Activated B cell treated with CpG ODN at 0.5 μM for 24 hours (primary cell): ENCODE measurements at regions of chr2 and their contacts with region 1.

Region 1: DNA sequence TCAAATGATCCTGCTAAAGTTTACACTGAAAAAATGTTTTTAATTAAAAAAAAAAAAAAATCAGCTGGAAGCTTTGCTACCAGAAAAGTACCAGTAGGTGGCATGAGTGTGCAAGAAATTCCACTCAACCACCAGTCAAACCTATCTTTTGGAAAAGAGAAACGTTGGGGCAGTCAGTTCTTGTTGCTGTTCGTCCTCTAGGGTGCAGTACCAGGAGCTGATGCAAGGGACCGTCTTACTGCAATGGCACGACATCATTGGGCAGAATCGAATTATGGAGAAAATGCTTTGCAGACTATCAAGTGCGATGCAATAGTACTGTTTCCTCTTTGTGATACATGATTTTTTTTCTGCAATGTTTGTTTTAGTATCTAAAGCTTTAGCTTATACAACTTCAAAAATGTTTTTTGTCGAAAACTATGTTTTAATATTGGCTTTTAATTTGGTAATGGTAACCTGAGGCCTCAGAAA is 18.3 kb downstream of the YPEL5 start:
- DNase-seq: no peak
- ATAC-seq: peak; percentile 100
- H3K4me3 Mint-ChIP-seq: no peak overlapping the region
- H3K27ac Mint-ChIP-seq: no peak overlapping the region
- H3K4me1 Mint-ChIP-seq: peaks cover 21% of the 10 kb centered on the region
- H3K27me3 Mint-ChIP-seq: no peaks in the 10 kb centered on the region
- CTCF ChIP-seq: peak; percentile 45

Region 2: DNA sequence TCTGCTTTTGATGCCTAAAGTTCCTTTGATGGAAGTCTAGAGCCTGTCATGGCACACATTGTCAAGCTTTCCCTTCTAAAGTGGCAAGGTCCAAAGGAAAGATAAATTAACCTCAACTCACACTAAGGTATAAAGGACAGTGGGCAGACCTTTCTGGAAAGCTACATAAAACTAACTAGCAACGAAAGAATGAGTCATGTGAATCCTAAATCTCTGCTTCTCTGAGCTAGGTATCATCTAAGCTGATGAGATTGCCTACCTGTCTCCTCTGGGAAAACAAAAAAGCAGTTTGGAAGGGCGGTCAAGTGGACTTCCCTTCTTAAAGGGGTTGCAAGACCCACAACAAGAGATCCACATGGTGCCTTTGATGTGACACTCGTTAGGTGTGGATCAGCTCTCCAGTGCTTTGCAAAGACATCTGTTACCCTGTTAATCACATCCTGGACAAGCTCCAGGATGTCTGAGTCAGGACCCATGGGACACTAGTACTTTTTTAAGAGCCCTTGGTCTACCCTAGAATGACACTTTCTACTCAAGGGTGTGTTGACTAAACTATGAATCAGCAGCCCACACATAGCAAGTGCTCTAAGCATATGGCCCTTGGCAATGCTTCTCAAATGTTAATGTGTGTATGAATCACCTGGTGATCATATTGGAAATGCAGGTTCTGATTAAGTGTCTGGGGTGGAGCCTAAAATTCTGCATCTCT is 417.1 kb before region 1 on chr2:
- CTCF ChIA-PET with region 1: no interaction called
- POLR2A ChIA-PET with region 1: no interaction called
- intact Hi-C with region 1: no loop called
- DNase-seq: no peak
- ATAC-seq: no peak
- H3K4me3 Mint-ChIP-seq: no peak overlapping the region
- H3K27ac Mint-ChIP-seq: no peak overlapping the region
- H3K4me1 Mint-ChIP-seq: no peaks in the 10 kb centered on the region
- H3K27me3 Mint-ChIP-seq: peaks cover 5% of the 10 kb centered on the region
- CTCF ChIP-seq: no peak

Region 3: GRCh38 chr2:30089171-30089570 is 75.9 kb before region 1 on chr2:
- CTCF ChIA-PET with region 1: interaction called, 13 read pairs
- POLR2A ChIA-PET with region 1: no interaction called
- intact Hi-C with region 1: loop called (anchors 1 kb)
- DNase-seq: no peak
- ATAC-seq: no peak
- H3K4me3 Mint-ChIP-seq: no peak overlapping the region
- H3K27ac Mint-ChIP-seq: no peak overlapping the region
- H3K4me1 Mint-ChIP-seq: no peaks in the 10 kb centered on the region
- H3K27me3 Mint-ChIP-seq: peaks cover 34% of the 10 kb centered on the region
- CTCF ChIP-seq: no peak

Region 4: DNA sequence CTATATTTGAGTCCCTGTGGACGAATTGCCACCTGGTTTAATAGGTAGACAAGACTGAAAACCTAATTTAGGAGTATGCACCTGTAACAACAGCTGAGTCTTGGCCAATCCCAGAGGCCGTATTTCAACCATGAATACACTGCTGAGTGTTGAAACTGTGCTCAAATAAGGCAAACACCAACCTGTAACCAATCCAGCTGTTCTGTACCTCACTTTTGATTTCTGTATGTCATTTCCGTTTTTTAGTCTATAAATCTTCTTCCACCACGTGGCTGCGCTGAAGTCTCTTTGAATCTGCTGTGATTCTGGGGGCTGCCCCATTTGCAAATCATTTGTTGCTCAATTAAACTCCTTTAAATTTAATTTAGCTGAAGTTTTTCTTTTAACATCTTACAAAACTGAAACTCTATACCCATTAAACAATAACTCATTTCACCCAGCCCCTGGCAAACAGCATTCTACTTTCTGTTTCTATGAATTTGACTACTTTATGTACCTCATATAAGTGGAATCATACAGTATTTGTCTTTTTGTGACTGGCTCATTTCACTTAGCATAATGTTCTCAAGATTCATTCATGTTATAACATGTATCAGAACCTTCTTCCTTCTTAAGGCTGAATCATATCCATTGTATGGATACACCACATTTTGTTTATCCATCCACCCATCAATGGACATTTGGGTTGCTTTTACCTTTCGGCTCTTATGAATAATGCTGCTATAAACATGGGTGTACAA is 25.8 kb before region 1 on chr2:
- CTCF ChIA-PET with region 1: interaction called, 13 read pairs
- POLR2A ChIA-PET with region 1: no interaction called
- intact Hi-C with region 1: no loop called
- DNase-seq: no peak
- ATAC-seq: peak; percentile 71
- H3K4me3 Mint-ChIP-seq: peak overlapping the region; percentile 32
- H3K27ac Mint-ChIP-seq: peak overlapping the region; percentile 64
- H3K4me1 Mint-ChIP-seq: peaks cover 11% of the 10 kb centered on the region
- H3K27me3 Mint-ChIP-seq: peaks cover 14% of the 10 kb centered on the region
- CTCF ChIP-seq: no peak

Region 5: GRCh38 chr2:30225131-30225762 is 60.2 kb after region 1 on chr2:
- CTCF ChIA-PET with region 1: interaction called, 13 read pairs
- POLR2A ChIA-PET with region 1: no interaction called
- intact Hi-C with region 1: no loop called
- DNase-seq: no peak
- ATAC-seq: peak; percentile 64
- H3K4me3 Mint-ChIP-seq: peak overlapping the region; percentile 90
- H3K27ac Mint-ChIP-seq: peak overlapping the region; percentile 99
- H3K4me1 Mint-ChIP-seq: peaks cover 63% of the 10 kb centered on the region
- H3K27me3 Mint-ChIP-seq: no peaks in the 10 kb centered on the region
- CTCF ChIP-seq: no peak

Region 6: DNA sequence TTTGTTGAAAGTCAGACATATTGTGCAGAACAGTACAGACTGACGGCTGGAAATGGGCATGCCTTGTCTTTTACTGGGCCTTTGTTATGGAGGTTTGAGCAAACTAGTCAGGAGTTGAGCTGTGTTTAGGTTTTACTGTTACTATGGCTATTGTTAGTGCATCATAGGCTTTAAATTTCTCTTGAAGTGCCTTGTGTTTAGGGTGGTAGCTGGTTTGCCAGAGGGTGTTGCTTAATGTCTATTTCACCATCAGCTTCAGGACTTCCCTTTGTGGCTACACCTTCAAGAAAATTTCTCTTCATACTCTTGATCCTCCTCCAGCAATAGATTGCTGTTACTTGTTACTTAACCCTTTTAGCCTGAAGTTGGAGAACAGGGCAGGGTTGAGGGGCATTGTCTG is 537.6 kb after region 1 on chr2:
- CTCF ChIA-PET with region 1: interaction called, 514 read pairs
- POLR2A ChIA-PET with region 1: interaction called, 18 read pairs
- intact Hi-C with region 1: loop called (anchors 1 kb)
- DNase-seq: no peak
- ATAC-seq: no peak
- H3K4me3 Mint-ChIP-seq: no peak overlapping the region
- H3K27ac Mint-ChIP-seq: no peak overlapping the region
- H3K4me1 Mint-ChIP-seq: peaks cover 4% of the 10 kb centered on the region
- H3K27me3 Mint-ChIP-seq: no peaks in the 10 kb centered on the region
- CTCF ChIP-seq: no peak

Region 7: DNA sequence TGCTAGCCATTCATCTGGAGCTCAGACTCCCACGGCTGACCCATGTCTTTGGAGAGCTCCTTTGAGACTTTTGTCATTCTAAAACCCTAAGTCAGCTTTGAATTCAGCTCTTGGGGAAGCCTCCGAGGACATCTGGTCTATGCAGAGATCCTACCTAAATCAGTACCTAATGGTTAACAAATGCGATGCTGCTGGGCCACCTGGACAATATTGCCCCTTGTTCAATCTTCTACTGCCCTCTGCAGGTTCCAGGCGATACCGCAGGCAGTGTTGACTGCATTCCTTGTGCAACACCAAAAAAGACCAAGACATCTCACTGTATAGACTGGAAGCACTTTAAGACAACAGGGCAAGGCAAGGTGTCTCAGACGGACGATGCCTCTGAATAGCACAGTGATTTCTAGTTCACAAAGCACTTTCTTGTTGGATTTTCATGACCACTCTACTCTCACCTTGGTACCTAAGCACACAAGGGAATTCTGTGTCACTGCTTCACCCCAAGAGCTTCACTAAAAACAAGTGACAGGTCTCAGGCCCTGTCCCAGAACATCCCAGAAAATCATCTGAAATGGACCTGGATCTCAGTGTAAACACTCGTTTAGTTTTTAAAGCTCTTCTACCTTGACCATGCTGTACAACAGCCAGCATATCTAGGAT is 1168.6 kb after region 1 on chr2:
- CTCF ChIA-PET with region 1: interaction called, 4 read pairs
- POLR2A ChIA-PET with region 1: no interaction called
- intact Hi-C with region 1: loop called (anchors 2 kb)
- DNase-seq: peak; percentile 70
- ATAC-seq: peak; percentile 94
- H3K4me3 Mint-ChIP-seq: no peak overlapping the region
- H3K27ac Mint-ChIP-seq: peak overlapping the region; percentile 50
- H3K4me1 Mint-ChIP-seq: peaks cover 10% of the 10 kb centered on the region
- H3K27me3 Mint-ChIP-seq: peaks cover 3% of the 10 kb centered on the region
- CTCF ChIP-seq: peak; percentile 87